Mammary epithelial cell (primary cell): ENCODE measurements at regions of chr15 and their contacts with region 1.

Region 1: GRCh38 chr15:73240866-73241499 is 127.8 kb downstream of the HCN4 start:
- DNase-seq: peak; percentile 44
- H3K4me3 ChIP-seq: no peak overlapping the region
- H3K27ac ChIP-seq: no peak overlapping the region
- H3K4me1 ChIP-seq: no peaks in the 10 kb centered on the region
- H3K27me3 ChIP-seq: no peaks in the 10 kb centered on the region
- CTCF ChIP-seq: peak; percentile 83 to 92

Region 2: DNA sequence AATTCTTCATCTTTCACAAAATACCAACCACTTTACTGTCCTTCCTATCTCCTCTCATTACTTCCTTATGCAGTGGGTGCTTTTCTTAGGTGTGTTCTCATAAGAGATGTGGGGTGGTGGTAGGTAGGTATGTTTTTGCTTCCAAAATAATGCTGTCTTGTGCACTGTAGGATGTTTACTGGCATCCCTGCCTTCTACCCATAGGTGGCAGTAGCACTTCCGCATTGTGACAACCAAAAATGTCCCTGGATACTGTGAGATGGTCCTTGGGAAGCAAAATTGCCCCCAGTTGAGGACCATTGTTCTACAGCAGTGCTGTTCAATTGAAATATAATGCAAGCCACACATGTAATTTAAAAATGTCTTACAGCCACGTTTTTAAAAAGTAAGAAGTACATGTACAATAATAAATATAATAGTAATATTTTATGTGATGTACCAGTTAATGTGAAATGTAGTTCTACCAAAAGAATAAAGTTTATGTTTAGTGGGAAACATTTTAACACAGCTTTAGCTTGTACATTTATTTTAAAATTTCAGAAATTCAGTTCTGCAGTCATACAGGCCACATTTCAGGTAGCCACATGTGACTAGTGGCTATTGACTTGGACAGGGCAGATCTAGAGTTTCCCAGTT is 113.6 kb before region 1 on chr15:
- CTCF ChIA-PET with region 1: no interaction called
- dilution Hi-C with region 1: no loop called
- in situ Hi-C with region 1: no loop called
- intact Hi-C with region 1: loop called (anchors 5 kb)
- DNase-seq: peak; percentile 14
- H3K4me3 ChIP-seq: no peak overlapping the region
- H3K27ac ChIP-seq: no peak overlapping the region
- H3K4me1 ChIP-seq: no peaks in the 10 kb centered on the region
- H3K27me3 ChIP-seq: no peaks in the 10 kb centered on the region
- CTCF ChIP-seq: peak; percentile 87 to 89

Region 3: GRCh38 chr15:73265536-73266153 is 24.7 kb after region 1 on chr15:
- CTCF ChIA-PET with region 1: interaction called, 6 read pairs
- dilution Hi-C with region 1: no loop called
- in situ Hi-C with region 1: no loop called
- intact Hi-C with region 1: loop called (anchors 1 kb)
- DNase-seq: peak; percentile 52
- H3K4me3 ChIP-seq: no peak overlapping the region
- H3K27ac ChIP-seq: no peak overlapping the region
- H3K4me1 ChIP-seq: no peaks in the 10 kb centered on the region
- H3K27me3 ChIP-seq: no peaks in the 10 kb centered on the region
- CTCF ChIP-seq: peak; percentile 42 to 60

Region 4: DNA sequence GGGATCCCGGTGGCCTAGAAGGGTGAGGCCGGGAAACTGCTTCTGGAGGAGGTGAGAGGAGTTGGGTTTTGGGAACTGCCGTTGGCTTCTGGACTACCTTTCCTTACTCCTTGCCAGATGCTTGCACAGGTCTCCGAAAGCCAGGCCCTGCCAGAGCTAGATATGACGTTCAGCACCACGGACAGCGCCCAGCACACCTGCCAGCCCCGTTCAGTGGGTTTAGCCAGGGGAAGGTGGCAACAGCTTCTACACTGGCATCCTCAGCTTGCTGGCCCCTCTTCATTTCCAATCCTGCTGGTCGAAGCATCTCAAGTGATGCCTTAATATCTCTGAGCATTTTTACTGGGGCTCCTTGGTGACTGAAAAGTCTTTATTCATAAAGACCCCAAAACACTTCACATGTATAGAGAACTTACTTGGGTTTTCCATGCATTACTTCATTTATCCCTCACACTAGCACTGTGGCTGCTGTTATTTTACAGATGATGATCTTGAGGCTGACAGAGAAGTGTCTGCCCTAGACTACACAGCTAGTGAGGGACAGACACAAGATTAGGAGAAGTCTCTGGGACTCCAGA is 105.8 kb after region 1 on chr15:
- CTCF ChIA-PET with region 1: no interaction called
- dilution Hi-C with region 1: loop called (anchors 25 kb)
- in situ Hi-C with region 1: no loop called
- intact Hi-C with region 1: no loop called
- DNase-seq: peak; percentile 47
- H3K4me3 ChIP-seq: no peak overlapping the region
- H3K27ac ChIP-seq: no peak overlapping the region
- H3K4me1 ChIP-seq: no peaks in the 10 kb centered on the region
- H3K27me3 ChIP-seq: no peaks in the 10 kb centered on the region
- CTCF ChIP-seq: no peak